ENCODE measurements at regions of chr6 and their contacts with region 1.

Region 1: DNA sequence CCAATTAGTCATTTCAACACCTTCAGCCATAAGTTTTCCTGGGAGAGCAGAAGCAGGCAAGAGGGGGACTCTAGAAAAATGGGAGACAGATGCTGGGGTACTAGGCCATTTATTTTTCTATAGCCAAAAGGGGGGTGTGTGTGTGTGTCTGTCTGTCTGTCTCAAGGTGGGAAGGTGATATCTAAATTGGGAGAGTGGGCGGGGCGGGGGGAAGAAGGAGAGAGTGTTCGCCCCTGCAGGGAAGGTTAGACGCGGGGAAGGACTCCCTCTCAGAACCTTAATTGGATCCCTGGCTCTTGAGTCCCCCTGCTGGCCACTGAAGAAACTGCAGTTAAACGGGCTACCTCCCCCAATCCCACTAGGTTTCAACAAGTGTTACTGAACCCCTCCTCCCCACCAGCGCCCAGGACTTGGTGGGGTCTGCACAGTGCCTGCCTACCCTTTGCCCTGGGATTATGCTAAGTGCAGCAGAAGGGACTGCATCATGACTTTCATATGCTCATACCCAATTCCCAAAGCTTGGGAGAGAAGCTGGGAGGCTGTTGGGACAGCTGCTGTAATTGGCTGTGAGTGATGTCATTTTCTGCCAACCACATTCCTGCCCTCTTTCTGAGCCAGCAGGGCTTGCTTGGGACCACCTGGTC is 45.8 kb downstream of the FOXP4 start:
- ATAC-seq: peak; percentile 29 to 95 (median 54)
- H3K4me3 ChIP-seq: no peak overlapping the region
- H3K27ac ChIP-seq: no peak overlapping the region
- H3K4me1 ChIP-seq: peaks cover 32 to 40% of the 10 kb centered on the region in 2 donors

Region 2: DNA sequence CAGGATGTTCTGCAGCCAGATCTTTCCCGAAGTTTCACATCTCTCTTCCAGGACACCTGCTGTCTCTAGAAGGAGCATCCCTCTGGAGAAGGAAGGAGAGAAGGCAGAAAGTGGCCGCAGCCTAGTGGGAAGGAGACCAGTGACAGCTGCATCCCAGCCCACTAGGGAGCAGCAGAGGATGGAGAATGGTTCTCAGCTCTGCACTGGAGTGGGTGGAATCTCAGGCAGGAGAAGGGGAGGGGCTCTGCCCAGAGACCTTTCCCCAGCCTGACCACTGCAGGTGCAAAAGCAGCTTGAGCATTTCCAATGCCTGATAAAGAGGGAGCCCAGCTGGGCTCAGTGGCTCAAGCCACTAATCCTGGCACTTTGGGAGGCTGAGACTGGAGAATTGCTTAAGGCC is 224.3 kb before region 1 on chr6:
- in situ Hi-C with region 1: loop called in 6 of 9 experiments (anchors 10 to 25 kb)
- ATAC-seq: peak; percentile 11 to 66 (median 23)
- H3K4me3 ChIP-seq: no peak overlapping the region
- H3K27ac ChIP-seq: no peak overlapping the region
- H3K4me1 ChIP-seq: peaks cover 16 to 19% of the 10 kb centered on the region in 2 donors

Region 3: GRCh38 chr6:41424370-41425058 is 167.5 kb before region 1 on chr6:
- in situ Hi-C with region 1: loop called in 4 of 9 experiments (anchors 10 to 25 kb)
- ATAC-seq: peak; percentile 20 to 70 (median 50)
- H3K4me3 ChIP-seq: no peak overlapping the region
- H3K27ac ChIP-seq: no peak overlapping the region
- H3K4me1 ChIP-seq: peaks cover 21 to 31% of the 10 kb centered on the region in 2 donors

Region 4: GRCh38 chr6:41463062-41463930 is 128.7 kb before region 1 on chr6:
- in situ Hi-C with region 1: loop called in 1 of 9 experiments (anchors 25 kb)
- ATAC-seq: peak; percentile 51 to 99 (median 70)
- H3K4me3 ChIP-seq: no peak overlapping the region
- H3K27ac ChIP-seq: no peak overlapping the region
- H3K4me1 ChIP-seq: peaks cover 21 to 30% of the 10 kb centered on the region in 2 donors

Region 5: GRCh38 chr6:41505122-41506049 is 86.6 kb before region 1 on chr6:
- in situ Hi-C with region 1: no loop called
- ATAC-seq: peak; percentile 66 to 94 (median 76)
- H3K4me3 ChIP-seq: peak overlapping the region in 4 of 5 donors; percentile 10 to 17 (median 13)
- H3K27ac ChIP-seq: no peak overlapping the region
- H3K4me1 ChIP-seq: peaks cover 43 to 46% of the 10 kb centered on the region in 2 donors

Region 6: GRCh38 chr6:41515995-41516394 is 76.0 kb before region 1 on chr6:
- in situ Hi-C with region 1: no loop called
- ATAC-seq: no peak
- H3K4me3 ChIP-seq: no peak overlapping the region
- H3K27ac ChIP-seq: no peak overlapping the region
- H3K4me1 ChIP-seq: peaks cover 10 to 13% of the 10 kb centered on the region in 2 donors

Region 7: GRCh38 chr6:42028234-42029061 is 436.5 kb after region 1 on chr6:
- in situ Hi-C with region 1: no loop called
- ATAC-seq: peak in 5 of 8 experiments; percentile 32 to 64 (median 41)
- H3K4me3 ChIP-seq: no peak overlapping the region
- H3K27ac ChIP-seq: no peak overlapping the region
- H3K4me1 ChIP-seq: no peaks in the 10 kb centered on the region